ENCODE measurements at regions of chr17 and their contacts with region 1.

Region 1: DNA sequence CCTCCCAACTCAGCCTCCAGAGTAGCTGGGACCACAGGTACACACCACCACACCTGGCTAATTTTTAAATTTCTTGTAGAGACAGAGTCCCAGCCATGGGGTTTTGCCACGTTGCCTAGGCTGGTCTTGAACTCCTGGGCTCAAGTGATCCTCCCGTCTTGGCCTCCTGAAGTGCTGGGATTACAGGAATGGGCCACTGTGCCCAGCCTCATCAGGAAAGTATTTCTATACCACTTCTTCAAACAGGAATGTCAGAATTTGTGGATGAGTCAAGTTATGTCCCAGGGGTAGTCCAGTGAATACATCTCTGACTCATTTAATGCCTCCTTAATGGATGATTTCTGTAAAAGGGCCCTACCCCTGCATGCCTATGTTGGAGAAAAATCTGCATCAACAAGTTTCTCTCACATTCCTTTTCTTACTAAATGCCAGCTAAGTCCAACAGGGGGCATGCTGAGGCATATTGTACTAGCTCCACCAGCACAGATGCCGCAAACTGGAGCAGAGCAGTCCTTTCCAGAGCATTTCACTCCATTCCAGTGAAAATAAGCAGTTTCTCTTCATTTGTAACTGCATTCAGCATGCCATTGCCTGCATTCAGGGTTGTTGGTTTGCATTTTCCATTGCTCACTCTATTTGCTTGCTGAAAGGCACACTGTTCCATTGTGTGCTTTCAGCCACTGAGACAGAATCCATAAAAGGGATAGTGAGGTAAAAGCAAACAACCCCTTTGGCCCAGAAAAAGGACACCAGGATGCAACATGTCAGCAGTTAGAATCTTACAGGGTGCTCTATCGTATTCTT is 5.3 kb upstream of the CAVIN1 start:
- DNase-seq: peak; percentile 99
- ATAC-seq: peak; percentile 92
- H3K4me3 ChIP-seq: no peak overlapping the region
- H3K27ac ChIP-seq: peak overlapping the region; percentile 64
- H3K4me1 ChIP-seq: peaks cover 13% of the 10 kb centered on the region
- H3K27me3 ChIP-seq: no peaks in the 10 kb centered on the region
- CTCF ChIP-seq: peak; percentile 82
- POLR2A ChIP-seq: peak; percentile 45; the same call in 1 of the 2 replicates
- RAD21 ChIP-seq: peak; percentile 82

Region 2: DNA sequence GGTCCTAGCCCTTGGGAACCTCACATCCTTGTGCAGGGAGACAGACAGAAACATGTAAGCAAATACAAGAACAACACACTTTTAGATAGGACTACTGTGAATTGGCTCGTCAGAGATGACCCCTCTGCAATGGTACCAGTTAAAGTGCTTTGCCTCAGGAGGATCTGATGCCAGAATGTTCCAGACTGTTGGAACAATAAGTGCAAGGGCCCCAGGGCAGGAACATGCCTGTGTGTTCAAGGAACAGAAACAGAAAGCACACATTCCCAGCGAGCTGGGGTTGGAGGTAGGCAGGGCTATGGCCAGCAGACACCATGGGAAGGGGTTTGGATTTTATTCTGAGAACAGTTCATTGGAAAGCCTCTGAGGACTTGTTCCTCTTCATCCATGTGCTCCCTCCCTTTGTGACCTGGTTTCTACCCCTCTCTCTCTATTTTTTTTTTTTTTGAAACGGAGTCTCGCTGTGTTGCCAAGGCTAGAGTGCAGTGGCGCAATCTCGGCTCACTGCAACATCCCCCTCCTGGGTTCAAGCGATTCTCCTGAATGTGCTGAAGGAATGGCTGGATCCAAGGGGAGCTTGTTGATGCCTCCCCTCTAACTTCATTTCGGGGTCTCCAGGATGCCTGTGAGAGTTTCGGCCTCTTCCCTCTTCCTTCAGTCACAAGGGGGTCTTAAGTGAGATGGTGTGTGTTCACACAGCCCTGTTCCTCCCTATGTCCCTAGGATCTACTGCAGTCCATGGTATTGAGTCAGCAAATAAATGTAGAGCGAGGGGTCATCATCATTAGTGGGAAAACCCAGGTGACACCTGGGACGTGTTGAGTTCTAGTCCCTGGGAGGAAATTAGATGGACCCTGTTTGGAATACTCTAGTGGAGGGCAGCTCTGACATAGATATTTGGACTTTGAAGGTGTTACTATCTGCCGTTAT is 133.6 kb before region 1 on chr17:
- CTCF ChIA-PET with region 1: no interaction called
- POLR2A ChIA-PET with region 1: no interaction called
- dilution Hi-C with region 1: no loop called
- in situ Hi-C with region 1: no loop called
- intact Hi-C with region 1: no loop called
- DNase-seq: no peak
- ATAC-seq: no peak
- H3K4me3 ChIP-seq: no peak overlapping the region
- H3K27ac ChIP-seq: no peak overlapping the region
- H3K4me1 ChIP-seq: no peaks in the 10 kb centered on the region
- H3K27me3 ChIP-seq: no peaks in the 10 kb centered on the region
- CTCF ChIP-seq: no peak
- POLR2A ChIP-seq: no peak
- RAD21 ChIP-seq: no peak

Region 3: GRCh38 chr17:42459256-42459800 is 31.0 kb after region 1 on chr17:
- CTCF ChIA-PET with region 1: no interaction called
- POLR2A ChIA-PET with region 1: no interaction called
- dilution Hi-C with region 1: no loop called
- in situ Hi-C with region 1: no loop called
- intact Hi-C with region 1: loop called (anchors 2 kb)
- DNase-seq: peak; percentile 69
- ATAC-seq: peak; percentile 37
- H3K4me3 ChIP-seq: peak overlapping the region; percentile 80
- H3K27ac ChIP-seq: peak overlapping the region; percentile 42; the same call in 1 of the 2 replicates
- H3K4me1 ChIP-seq: peaks cover 12% of the 10 kb centered on the region
- H3K27me3 ChIP-seq: no peaks in the 10 kb centered on the region
- CTCF ChIP-seq: peak; percentile 38
- POLR2A ChIP-seq: no peak
- RAD21 ChIP-seq: no peak

Measured in IMR-90 (cell line).